ENCODE measurements at regions of chr7 and their contacts with region 1.

Region 1: GRCh38 chr7:115052706-115053105 is 130.8 kb downstream of the MDFIC start:
- DNase-seq: no peak
- ATAC-seq: no peak
- H3K4me3 ChIP-seq: no peak overlapping the region
- H3K4me3 Mint-ChIP-seq: no peak overlapping the region
- H3K27ac ChIP-seq: no peak overlapping the region
- H3K27ac Mint-ChIP-seq: no peak overlapping the region
- H3K4me1 ChIP-seq: no peaks in the 10 kb centered on the region
- H3K4me1 Mint-ChIP-seq: peaks cover 0 to 7% (median 0%) of the 10 kb centered on the region in 3 donors
- H3K27me3 ChIP-seq: no peaks in the 10 kb centered on the region
- H3K27me3 Mint-ChIP-seq: peaks cover 0 to 1% of the 10 kb centered on the region in 2 donors

Region 2: GRCh38 chr7:115008465-115009114 is 44.1 kb before region 1 on chr7:
- CTCF ChIA-PET with region 1: no interaction called
- POLR2A ChIA-PET with region 1: interaction called in 1 of 2 experiments, 11 read pairs
- DNase-seq: peak in 1 of 35 experiments; percentile 23
- ATAC-seq: peak; percentile 40 to 51 (median 44)
- H3K4me3 ChIP-seq: peak overlapping the region; percentile 2 to 11
- H3K4me3 Mint-ChIP-seq: peak overlapping the region; percentile 64 to 75 (median 71)
- H3K27ac ChIP-seq: peak overlapping the region; percentile 60
- H3K27ac Mint-ChIP-seq: peak overlapping the region; percentile 90 to 91
- H3K4me1 ChIP-seq: peaks cover 31 to 47% of the 10 kb centered on the region in 2 experiments
- H3K4me1 Mint-ChIP-seq: peaks cover 78 to 89% (median 85%) of the 10 kb centered on the region in 3 donors
- H3K27me3 ChIP-seq: no peaks in the 10 kb centered on the region
- H3K27me3 Mint-ChIP-seq: no peaks in the 10 kb centered on the region

Region 3: GRCh38 chr7:115032715-115033703 is 19.7 kb before region 1 on chr7:
- CTCF ChIA-PET with region 1: no interaction called
- POLR2A ChIA-PET with region 1: no interaction called
- DNase-seq: no peak
- ATAC-seq: no peak
- H3K4me3 ChIP-seq: no peak overlapping the region
- H3K4me3 Mint-ChIP-seq: no peak overlapping the region
- H3K27ac ChIP-seq: no peak overlapping the region
- H3K27ac Mint-ChIP-seq: no peak overlapping the region
- H3K4me1 ChIP-seq: no peaks in the 10 kb centered on the region
- H3K4me1 Mint-ChIP-seq: peaks cover 5 to 10% (median 10%) of the 10 kb centered on the region in 3 donors
- H3K27me3 ChIP-seq: no peaks in the 10 kb centered on the region
- H3K27me3 Mint-ChIP-seq: no peaks in the 10 kb centered on the region